Activated CD4-positive, alpha-beta T cell treated with anti-CD3 and anti-CD28 coated beads for 36 hours (primary cell): ENCODE measurements at regions of chr4 and their contacts with region 1.

Region 1: DNA sequence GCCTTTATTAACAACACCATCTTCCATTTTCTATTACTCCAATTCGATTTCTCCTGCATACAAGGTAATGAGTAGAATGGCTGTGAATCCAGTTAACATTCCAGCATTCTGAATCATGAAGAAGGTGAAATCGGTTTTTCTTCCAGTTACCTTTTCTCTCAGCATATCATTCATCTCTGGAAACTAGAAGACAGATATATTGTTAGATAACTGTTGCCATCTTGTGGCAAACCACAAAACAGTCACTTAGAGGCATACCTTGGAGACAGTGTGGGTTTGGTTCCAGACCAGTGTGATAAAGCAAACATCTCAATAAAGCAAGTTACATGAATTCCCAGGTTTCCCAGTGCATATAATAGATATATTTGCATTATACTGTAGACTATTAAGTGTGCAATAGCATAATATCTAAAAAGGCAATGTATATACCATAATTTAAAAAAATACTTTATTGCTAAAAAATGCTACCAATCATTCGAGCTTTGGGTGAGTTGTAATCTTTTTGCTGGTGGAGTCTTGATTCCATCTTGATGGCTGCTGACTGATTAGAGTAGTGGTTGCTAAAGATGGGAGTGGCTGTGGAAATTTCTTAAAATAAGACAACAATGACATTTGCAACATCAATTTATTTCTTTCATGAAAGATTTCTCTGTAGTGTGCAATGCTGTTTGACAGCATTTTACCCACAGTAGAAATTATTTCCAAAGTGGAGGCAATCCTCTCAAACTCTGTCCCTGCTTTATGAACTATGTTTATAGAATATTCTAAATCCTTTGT is 82.1 kb downstream of the SLC39A8 start:
- DNase-seq: peak; percentile 20
- ATAC-seq: peak; percentile 88
- H3K4me3 Mint-ChIP-seq: no peak overlapping the region
- H3K27ac Mint-ChIP-seq: no peak overlapping the region
- H3K4me1 Mint-ChIP-seq: peaks cover 10% of the 10 kb centered on the region
- H3K27me3 Mint-ChIP-seq: no peaks in the 10 kb centered on the region

Region 2: GRCh38 chr4:102620697-102621497 is 357.7 kb after region 1 on chr4:
- CTCF ChIA-PET with region 1: no interaction called
- POLR2A ChIA-PET with region 1: no interaction called
- intact Hi-C with region 1: loop called in 1 of 2 experiments (anchors 5 kb)
- DNase-seq: peak; percentile 30
- ATAC-seq: peak; percentile 25
- H3K4me3 Mint-ChIP-seq: no peak overlapping the region
- H3K27ac Mint-ChIP-seq: peak overlapping the region; percentile 47
- H3K4me1 Mint-ChIP-seq: peaks cover 50% of the 10 kb centered on the region
- H3K27me3 Mint-ChIP-seq: no peaks in the 10 kb centered on the region